Transverse colon (tissue), 4 donors: ENCODE measurements at regions of chr14 and their contacts with region 1.

Region 1: GRCh38 chr14:20690848-20691523 is 2.4 kb downstream of the ANG start:
- DNase-seq: peak; percentile 48
- H3K4me3 ChIP-seq: no peak overlapping the region
- H3K27ac ChIP-seq: peak overlapping the region in 1 of 4 donors; percentile 34
- H3K4me1 ChIP-seq: peaks cover 6 to 47% (median 28%) of the 10 kb centered on the region in 4 donors
- H3K27me3 ChIP-seq: no peaks in the 10 kb centered on the region
- CTCF ChIP-seq: peak; percentile 77 to 91 (median 88)
- EP300 ChIP-seq: no peak
- POLR2A ChIP-seq: no peak

Region 2: GRCh38 chr14:20516906-20517305 is 174.1 kb before region 1 on chr14:
- in situ Hi-C with region 1: no loop called
- intact Hi-C with region 1: loop called (anchors 10 kb)
- DNase-seq: no peak
- H3K4me3 ChIP-seq: no peak overlapping the region
- H3K27ac ChIP-seq: no peak overlapping the region
- H3K4me1 ChIP-seq: no peaks in the 10 kb centered on the region
- H3K27me3 ChIP-seq: no peaks in the 10 kb centered on the region
- CTCF ChIP-seq: no peak
- EP300 ChIP-seq: no peak
- POLR2A ChIP-seq: no peak

Region 3: DNA sequence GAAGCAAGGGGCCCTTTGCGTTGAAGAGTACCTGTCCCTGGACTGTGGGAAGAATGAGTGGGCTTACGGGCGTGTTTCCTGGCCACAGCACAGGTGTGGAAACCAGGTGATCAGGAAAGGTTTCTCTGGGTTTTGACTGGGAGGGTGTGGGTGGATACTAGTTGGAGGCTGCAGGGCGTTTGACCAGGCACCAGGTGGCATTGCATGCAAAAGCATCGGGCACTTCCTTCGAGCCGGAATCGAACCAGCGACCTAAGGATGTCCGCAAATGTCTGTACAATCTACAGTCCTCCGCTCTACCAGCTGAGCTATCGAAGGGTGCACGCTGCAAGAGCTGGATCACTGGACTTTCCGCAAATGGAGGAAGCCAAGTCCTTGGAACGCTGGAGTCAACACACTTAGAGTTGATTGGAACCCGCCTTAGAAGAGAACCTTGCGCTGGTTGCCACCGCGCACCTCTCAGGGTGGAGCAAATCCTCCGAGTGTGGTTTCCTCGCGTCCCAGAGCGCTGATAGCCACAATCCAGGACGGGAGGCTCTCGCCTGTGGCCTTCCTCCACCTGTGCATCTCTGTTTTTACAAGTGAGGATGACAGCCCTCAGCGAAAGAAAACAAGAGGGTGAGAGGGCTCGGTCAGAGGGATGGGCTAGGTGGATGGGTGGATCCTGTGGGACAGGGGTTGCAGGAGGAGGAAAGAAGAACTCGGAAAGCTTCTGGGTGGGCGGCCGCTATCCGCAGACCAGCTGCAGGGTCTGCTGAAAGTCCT is 27.8 kb before region 1 on chr14:
- in situ Hi-C with region 1: no loop called
- intact Hi-C with region 1: loop called (anchors 2 kb)
- DNase-seq: peak; percentile 83
- H3K4me3 ChIP-seq: peak overlapping the region in 2 of 4 donors; percentile 6 to 34
- H3K27ac ChIP-seq: no peak overlapping the region
- H3K4me1 ChIP-seq: peaks cover 0 to 15% (median 7%) of the 10 kb centered on the region in 4 donors
- H3K27me3 ChIP-seq: peaks cover 29% of the 10 kb centered on the region
- CTCF ChIP-seq: peak; percentile 54 to 83 (median 66)
- EP300 ChIP-seq: no peak
- POLR2A ChIP-seq: no peak

Region 4: GRCh38 chr14:20855652-20856291 is 164.8 kb after region 1 on chr14:
- in situ Hi-C with region 1: loop called in 1 of 4 experiments (anchors 10 kb)
- intact Hi-C with region 1: loop called (anchors 10 kb)
- DNase-seq: peak; percentile 57
- H3K4me3 ChIP-seq: no peak overlapping the region
- H3K27ac ChIP-seq: no peak overlapping the region
- H3K4me1 ChIP-seq: peaks cover 0 to 8% (median 0%) of the 10 kb centered on the region in 4 donors
- H3K27me3 ChIP-seq: no peaks in the 10 kb centered on the region
- CTCF ChIP-seq: peak; percentile 59 to 86 (median 62)
- EP300 ChIP-seq: no peak
- POLR2A ChIP-seq: no peak

Region 5: DNA sequence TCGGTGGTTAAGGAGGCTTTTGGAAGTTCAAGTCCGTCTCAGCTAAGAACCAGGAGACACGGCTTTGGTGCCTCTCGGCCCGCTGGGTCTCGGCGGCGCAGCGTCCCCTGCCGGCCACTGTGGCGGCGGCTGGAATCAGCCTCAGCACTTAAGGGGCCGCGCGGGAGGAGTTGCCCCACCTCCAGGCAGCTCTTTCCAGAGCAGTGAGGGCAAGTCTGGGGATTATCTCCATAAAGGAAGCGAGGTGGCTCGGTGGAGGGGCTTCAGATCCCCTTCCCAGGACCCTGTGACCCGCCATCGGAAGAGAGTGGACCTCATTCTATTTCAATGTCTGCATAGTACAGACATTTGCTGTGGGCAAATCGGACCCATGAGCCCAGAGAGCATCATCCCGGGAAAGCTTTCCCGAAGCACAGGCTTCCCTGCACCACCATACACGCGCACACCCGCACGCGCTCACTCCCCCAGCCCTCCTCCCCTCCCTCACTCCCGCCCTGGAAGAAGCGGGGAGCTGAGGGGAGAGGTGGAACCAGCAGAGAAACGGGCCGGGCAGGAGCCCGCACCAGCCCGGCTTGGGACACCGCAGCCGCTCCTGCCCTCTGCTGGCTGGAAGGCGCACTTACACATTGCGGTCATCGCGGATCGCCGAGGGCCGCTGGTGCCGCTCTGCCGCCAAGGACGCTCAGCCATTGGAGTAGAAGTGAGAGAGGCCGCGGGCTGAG is 280.2 kb after region 1 on chr14:
- in situ Hi-C with region 1: loop called in 2 of 4 experiments (anchors 10 to 25 kb)
- intact Hi-C with region 1: no loop called
- DNase-seq: peak; percentile 82
- H3K4me3 ChIP-seq: peak overlapping the region; percentile 33 to 55 (median 38)
- H3K27ac ChIP-seq: peak overlapping the region; percentile 62 to 86 (median 72)
- H3K4me1 ChIP-seq: peaks cover 0 to 5% (median 0%) of the 10 kb centered on the region in 4 donors
- H3K27me3 ChIP-seq: no peaks in the 10 kb centered on the region
- CTCF ChIP-seq: peak; percentile 73 to 89 (median 79)
- EP300 ChIP-seq: no peak
- POLR2A ChIP-seq: no peak